ENCODE measurements at regions of chr6 and their contacts with region 1.

Region 1: DNA sequence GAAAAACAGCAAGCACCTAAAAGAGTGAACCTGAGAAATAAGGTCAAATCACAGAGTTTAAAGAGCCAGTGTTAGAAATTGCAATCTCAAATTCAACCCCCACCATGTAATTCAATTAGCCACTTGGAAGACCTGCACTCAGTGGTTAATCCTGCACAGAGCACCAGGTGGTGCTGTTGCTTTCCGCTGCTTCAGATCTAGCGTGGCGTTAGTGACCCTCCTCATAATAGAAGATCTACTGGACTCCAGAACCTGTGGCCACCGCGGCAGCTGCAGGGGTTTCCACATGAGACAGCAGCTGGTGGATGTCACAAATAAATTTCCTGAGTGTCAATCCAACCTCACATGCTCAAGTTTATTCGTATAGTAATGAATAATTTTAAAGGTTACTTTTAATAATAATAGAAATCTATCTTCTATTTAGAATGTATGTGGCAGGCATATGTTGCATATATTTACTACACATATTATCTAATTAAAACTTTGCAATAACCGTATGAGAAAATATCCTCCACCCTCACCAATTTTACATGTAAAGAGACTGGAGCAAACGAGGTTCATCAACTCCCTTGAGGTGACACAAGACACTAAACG is 84.4 kb downstream of the SYNE1 start:
- DNase-seq: peak; percentile 56
- ATAC-seq: peak; percentile 77
- H3K4me3 Mint-ChIP-seq: no peak overlapping the region
- H3K27ac Mint-ChIP-seq: no peak overlapping the region
- H3K4me1 Mint-ChIP-seq: no peaks in the 10 kb centered on the region
- H3K27me3 Mint-ChIP-seq: peaks cover 5% of the 10 kb centered on the region
- CTCF ChIP-seq: peak; percentile 74

Region 2: DNA sequence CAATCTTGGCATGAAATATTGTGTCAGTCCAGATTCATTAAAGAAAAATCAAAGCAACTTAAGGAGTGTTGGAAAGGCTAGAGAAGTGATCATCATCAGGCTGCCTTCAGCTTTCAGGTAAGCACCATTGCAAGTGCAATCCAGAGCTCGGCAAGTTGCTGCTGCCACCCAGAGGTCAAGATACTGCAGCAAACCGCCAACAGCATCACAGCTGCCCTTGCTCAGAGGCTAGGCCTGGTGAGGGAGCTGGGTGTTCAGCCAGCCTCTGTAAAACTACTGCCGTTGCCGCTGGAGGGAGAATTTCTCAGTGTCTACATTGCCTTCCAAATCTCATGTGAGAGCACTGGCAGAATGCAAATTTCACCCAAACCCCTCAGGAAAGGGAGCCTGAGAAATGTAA is 90.3 kb after region 1 on chr6:
- CTCF ChIA-PET with region 1: interaction called, 37 read pairs
- POLR2A ChIA-PET with region 1: no interaction called
- intact Hi-C with region 1: loop called (anchors 5 kb)
- DNase-seq: peak; percentile 51
- ATAC-seq: peak; percentile 61
- H3K4me3 Mint-ChIP-seq: no peak overlapping the region
- H3K27ac Mint-ChIP-seq: no peak overlapping the region
- H3K4me1 Mint-ChIP-seq: peaks cover under 1% of the 10 kb centered on the region
- H3K27me3 Mint-ChIP-seq: peaks cover 11% of the 10 kb centered on the region
- CTCF ChIP-seq: peak; percentile 17

Region 3: DNA sequence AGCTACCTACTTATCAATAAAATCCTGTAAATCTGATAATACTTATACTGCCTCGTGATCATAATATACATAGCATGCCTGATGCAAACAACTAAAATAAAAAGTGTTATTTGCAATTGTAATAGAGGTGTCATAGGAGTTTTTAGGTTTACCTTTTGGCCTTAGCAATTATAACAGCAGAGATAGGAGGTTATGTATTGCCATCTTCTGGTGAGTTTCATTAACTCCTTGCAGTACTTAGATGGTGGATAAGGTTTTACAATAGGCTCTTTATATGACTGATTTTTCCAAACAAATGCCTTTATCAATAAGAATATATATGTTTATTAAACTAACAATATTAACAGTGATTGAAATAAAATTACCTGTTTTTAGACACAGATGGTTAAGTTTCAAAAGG is 117.2 kb after region 1 on chr6:
- CTCF ChIA-PET with region 1: interaction called, 11 read pairs
- POLR2A ChIA-PET with region 1: no interaction called
- intact Hi-C with region 1: no loop called
- DNase-seq: no peak
- ATAC-seq: no peak
- H3K4me3 Mint-ChIP-seq: no peak overlapping the region
- H3K27ac Mint-ChIP-seq: no peak overlapping the region
- H3K4me1 Mint-ChIP-seq: no peaks in the 10 kb centered on the region
- H3K27me3 Mint-ChIP-seq: peaks cover 16% of the 10 kb centered on the region
- CTCF ChIP-seq: peak; percentile 26